Activated B cell treated with CpG ODN at 0.5 μM for 24 hours (primary cell): ENCODE measurements at regions of chr19 and their contacts with region 1.

Region 1: DNA sequence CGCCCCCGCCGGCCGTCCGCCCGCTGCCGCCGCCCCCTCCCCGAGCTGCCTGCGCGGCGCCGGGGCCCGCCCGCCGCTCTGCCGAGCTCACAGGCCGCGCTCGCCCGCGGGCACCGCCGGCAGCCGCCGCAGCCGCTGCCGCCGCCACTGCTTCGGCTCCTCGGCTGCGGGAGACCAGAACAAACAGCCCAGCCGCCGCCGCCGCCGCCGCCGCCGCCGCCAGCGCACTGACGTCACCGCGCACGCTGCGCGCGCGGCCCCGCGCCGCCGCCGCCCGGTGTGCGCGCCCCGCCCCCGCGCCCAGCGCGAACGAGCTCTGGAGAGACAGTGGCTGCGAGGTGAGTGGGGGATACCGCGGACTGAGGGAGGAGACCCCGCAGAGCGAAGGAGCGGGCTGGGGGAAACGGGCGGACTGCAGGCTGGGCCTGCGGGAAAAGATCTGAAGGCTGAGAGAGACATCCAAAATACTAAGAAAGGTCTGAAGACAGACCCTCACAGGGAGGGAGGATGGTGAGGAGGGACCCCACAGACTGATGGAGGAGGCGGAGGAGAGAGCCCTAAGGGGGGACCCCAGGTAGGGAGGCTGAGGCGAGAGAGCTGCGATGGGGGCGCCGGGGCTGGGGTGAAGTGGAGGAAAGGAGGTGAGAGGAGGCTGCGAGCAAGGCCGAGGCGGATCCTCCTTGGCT is at the start of gene BRD4:
- DNase-seq: peak; percentile 86
- ATAC-seq: peak; percentile 35
- H3K4me3 Mint-ChIP-seq: peak within 1 kb of the TSS; percentile 95
- H3K27ac Mint-ChIP-seq: peak within 1 kb of the TSS; percentile 95
- H3K4me1 Mint-ChIP-seq: peaks cover 60% of the 10 kb centered on the region
- H3K27me3 Mint-ChIP-seq: no peaks in the 10 kb centered on the region
- CTCF ChIP-seq: no peak
- total RNA-seq, gene BRD4: 144 and 164 TPM in 2 replicates

Region 2: DNA sequence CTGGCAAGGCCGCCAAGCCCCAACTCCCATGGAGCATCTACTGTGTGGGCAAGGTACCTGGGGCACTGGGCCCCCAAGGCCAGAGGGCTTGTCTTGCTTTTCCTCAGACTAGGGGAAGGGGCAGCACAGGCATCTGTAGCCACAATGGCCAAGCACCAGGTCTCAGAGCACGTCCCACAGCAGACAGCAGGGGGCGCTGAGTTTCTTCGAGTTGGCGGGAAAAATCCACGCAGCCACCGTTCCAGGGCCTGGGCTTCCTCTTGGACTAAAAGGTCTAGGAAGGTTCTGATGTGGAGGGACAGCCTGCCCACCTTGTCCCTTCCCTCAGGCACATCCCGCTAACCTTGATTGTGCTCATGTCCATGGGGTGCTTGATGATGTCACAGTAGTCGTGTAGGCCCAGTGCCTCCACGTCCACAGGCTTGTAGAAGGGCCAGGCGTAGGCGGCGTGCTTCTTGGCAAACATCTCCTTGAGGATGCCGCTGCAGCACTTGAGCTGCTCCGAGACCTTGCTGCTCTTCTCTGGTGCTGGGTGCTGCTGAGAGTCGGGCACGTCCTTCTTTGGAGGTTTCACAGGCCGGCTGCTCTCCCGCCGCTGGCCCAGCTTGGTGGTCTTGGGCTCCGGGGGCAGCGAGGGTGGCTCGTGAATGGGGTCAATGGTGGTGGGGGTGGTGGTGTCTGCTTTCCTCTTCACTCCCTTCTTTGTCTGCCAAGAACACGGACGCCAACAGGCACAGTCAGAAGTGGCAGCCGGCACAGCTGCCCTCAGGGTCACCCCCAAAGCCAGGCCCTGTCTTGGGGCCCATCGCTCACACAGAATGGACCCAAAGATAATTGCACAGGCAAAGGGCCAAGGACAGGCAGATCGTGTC is 68.2 kb before region 1 on chr19:
- CTCF ChIA-PET with region 1: interaction called, 3 read pairs
- POLR2A ChIA-PET with region 1: no interaction called
- intact Hi-C with region 1: loop called (anchors 1 kb)
- DNase-seq: peak; percentile 72
- ATAC-seq: peak; percentile 76
- H3K4me3 Mint-ChIP-seq: no peak overlapping the region
- H3K27ac Mint-ChIP-seq: no peak overlapping the region
- H3K4me1 Mint-ChIP-seq: peaks cover 9% of the 10 kb centered on the region
- H3K27me3 Mint-ChIP-seq: no peaks in the 10 kb centered on the region
- CTCF ChIP-seq: peak; percentile 36

Region 3: GRCh38 chr19:15288146-15288963 is 44.1 kb before region 1 on chr19:
- CTCF ChIA-PET with region 1: interaction called, 5 read pairs
- POLR2A ChIA-PET with region 1: interaction called, 18 read pairs
- intact Hi-C with region 1: loop called (anchors 1 kb)
- DNase-seq: peak; percentile 48
- ATAC-seq: peak; percentile 75
- H3K4me3 Mint-ChIP-seq: peak overlapping the region; percentile 72
- H3K27ac Mint-ChIP-seq: peak overlapping the region; percentile 80
- H3K4me1 Mint-ChIP-seq: peaks cover 96% of the 10 kb centered on the region
- H3K27me3 Mint-ChIP-seq: no peaks in the 10 kb centered on the region
- CTCF ChIP-seq: no peak

Region 4: DNA sequence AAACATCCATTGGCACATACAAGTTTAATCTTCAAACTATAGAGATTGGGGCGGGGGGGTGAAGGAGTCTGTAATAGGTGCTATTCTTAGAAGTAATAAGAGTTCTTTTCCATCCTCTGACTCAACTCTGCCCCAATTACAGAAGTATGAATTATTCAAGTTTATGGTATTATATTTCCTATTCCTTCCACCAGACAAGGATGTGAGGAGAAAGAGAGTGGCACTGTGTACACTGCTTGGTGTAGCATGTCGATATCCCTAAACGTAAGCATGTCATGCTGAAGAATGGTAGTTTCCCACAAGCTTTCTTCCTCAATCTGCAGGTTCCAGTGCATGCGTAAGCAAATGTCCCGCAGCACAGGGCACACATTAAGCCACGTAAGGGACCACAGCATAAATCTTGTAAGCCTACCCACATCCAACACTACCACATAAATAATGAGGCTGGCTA is 14.2 kb before region 1 on chr19:
- CTCF ChIA-PET with region 1: no interaction called
- POLR2A ChIA-PET with region 1: interaction called, 51 read pairs
- intact Hi-C with region 1: loop called (anchors 1 kb)
- DNase-seq: no peak
- ATAC-seq: peak; percentile 82
- H3K4me3 Mint-ChIP-seq: peak overlapping the region; percentile 69
- H3K27ac Mint-ChIP-seq: peak overlapping the region; percentile 82
- H3K4me1 Mint-ChIP-seq: peaks cover 87% of the 10 kb centered on the region
- H3K27me3 Mint-ChIP-seq: no peaks in the 10 kb centered on the region
- CTCF ChIP-seq: no peak

Region 5: DNA sequence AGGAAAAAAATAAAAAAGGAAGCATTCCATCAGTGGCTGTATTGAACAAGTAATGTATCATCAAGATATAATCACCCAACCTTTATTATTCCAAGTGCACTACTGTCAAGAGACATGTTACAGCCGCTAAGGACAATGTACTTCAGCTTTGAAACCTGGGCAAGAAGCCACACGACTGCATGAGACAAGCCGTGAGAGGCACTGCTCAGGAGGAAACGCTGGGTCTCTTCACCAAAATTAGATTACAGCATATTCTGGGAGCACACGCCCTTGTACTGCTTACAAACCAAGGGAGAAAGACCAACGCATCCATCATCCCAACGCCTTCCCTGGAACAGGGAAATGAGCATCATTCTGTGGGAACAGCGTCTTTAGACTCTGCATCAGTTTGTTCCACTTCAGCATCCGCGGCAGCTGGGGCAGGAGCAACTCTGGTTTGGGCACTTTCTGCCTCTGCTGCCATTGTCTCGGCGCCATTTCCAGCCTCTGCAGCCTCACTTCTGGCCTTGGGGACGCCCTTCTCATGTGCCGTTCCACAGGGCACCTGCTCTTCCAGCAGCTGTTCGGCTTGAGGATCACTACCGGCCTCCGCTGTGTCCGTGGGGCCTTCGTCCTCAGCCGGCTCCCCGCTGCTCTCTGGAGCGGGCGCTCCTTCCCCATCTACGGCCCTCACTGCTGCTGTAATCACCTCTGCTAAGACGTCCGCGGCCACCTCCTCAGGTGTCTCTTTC is 22.3 kb after region 1 on chr19:
- CTCF ChIA-PET with region 1: no interaction called
- POLR2A ChIA-PET with region 1: interaction called, 13 read pairs
- intact Hi-C with region 1: no loop called
- DNase-seq: no peak
- ATAC-seq: no peak
- H3K4me3 Mint-ChIP-seq: no peak overlapping the region
- H3K27ac Mint-ChIP-seq: peak overlapping the region; percentile 32
- H3K4me1 Mint-ChIP-seq: no peaks in the 10 kb centered on the region
- H3K27me3 Mint-ChIP-seq: no peaks in the 10 kb centered on the region
- CTCF ChIP-seq: no peak

Region 6: GRCh38 chr19:15432629-15433518 is 100.4 kb after region 1 on chr19:
- CTCF ChIA-PET with region 1: no interaction called
- POLR2A ChIA-PET with region 1: no interaction called
- intact Hi-C with region 1: loop called (anchors 5 kb)
- DNase-seq: peak; percentile 92
- ATAC-seq: peak; percentile 89
- H3K4me3 Mint-ChIP-seq: peak overlapping the region; percentile 97
- H3K27ac Mint-ChIP-seq: peak overlapping the region; percentile 93
- H3K4me1 Mint-ChIP-seq: peaks cover 31% of the 10 kb centered on the region
- H3K27me3 Mint-ChIP-seq: no peaks in the 10 kb centered on the region
- CTCF ChIP-seq: no peak

Region 7: DNA sequence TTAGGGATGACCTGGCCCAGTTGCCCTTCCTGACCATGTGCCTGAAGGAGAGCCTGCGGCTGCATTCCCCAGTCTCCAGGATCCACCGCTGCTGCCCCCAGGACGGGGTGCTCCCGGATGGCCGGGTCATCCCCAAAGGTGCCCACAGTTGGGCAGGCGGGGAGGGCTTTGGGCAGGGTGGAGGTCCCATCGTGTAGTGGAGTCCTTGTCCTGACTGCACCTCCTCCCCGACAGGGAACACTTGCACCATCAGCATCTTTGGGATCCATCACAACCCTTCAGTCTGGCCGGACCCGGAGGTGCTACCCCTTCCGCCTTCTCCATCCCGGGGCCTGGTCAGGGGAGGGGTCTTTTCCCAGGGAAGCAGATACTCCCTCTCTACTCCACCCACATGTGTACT is 250.9 kb after region 1 on chr19:
- CTCF ChIA-PET with region 1: no interaction called
- POLR2A ChIA-PET with region 1: no interaction called
- intact Hi-C with region 1: no loop called
- DNase-seq: no peak
- ATAC-seq: no peak
- H3K4me3 Mint-ChIP-seq: no peak overlapping the region
- H3K27ac Mint-ChIP-seq: no peak overlapping the region
- H3K4me1 Mint-ChIP-seq: peaks cover 6% of the 10 kb centered on the region
- H3K27me3 Mint-ChIP-seq: peaks cover 18% of the 10 kb centered on the region
- CTCF ChIP-seq: no peak

Region 8: GRCh38 chr19:15885167-15885566 is 552.7 kb after region 1 on chr19:
- CTCF ChIA-PET with region 1: no interaction called
- POLR2A ChIA-PET with region 1: no interaction called
- intact Hi-C with region 1: no loop called
- DNase-seq: no peak
- ATAC-seq: no peak
- H3K4me3 Mint-ChIP-seq: no peak overlapping the region
- H3K27ac Mint-ChIP-seq: no peak overlapping the region
- H3K4me1 Mint-ChIP-seq: no peaks in the 10 kb centered on the region
- H3K27me3 Mint-ChIP-seq: peaks cover 18% of the 10 kb centered on the region
- CTCF ChIP-seq: no peak